OCI-LY7 (cell line): ENCODE measurements at regions of chr17 and their contacts with region 1.

Region 1: GRCh38 chr17:75301049-75301448 is 11.8 kb upstream of the SLC25A19 start:
- DNase-seq: no peak
- H3K4me3 ChIP-seq: no peak overlapping the region
- H3K27ac ChIP-seq: no peak overlapping the region
- H3K4me1 ChIP-seq: peaks cover 41% of the 10 kb centered on the region
- CTCF ChIP-seq: no peak

Region 2: GRCh38 chr17:74316220-74316619 is 984.8 kb before region 1 on chr17:
- CTCF ChIA-PET with region 1: no interaction called
- POLR2A ChIA-PET with region 1: no interaction called
- intact Hi-C with region 1: no loop called
- DNase-seq: no peak
- H3K4me3 ChIP-seq: no peak overlapping the region
- H3K27ac ChIP-seq: no peak overlapping the region
- H3K4me1 ChIP-seq: no peaks in the 10 kb centered on the region
- CTCF ChIP-seq: no peak

Region 3: GRCh38 chr17:75182569-75183450 is 118.2 kb before region 1 on chr17 and contains the start of gene SUMO2:
- CTCF ChIA-PET with region 1: no interaction called
- POLR2A ChIA-PET with region 1: no interaction called
- intact Hi-C with region 1: no loop called
- DNase-seq: peak; percentile 100
- H3K4me3 ChIP-seq: peak within 1 kb of the TSS; percentile 88
- H3K27ac ChIP-seq: peak within 1 kb of the TSS; percentile 91
- H3K4me1 ChIP-seq: peaks cover 24% of the 10 kb centered on the region
- CTCF ChIP-seq: peak; percentile 41; the same call in 1 of the 2 replicates
- total RNA-seq, gene SUMO2: 286 and 296 TPM in 2 replicates

Region 4: DNA sequence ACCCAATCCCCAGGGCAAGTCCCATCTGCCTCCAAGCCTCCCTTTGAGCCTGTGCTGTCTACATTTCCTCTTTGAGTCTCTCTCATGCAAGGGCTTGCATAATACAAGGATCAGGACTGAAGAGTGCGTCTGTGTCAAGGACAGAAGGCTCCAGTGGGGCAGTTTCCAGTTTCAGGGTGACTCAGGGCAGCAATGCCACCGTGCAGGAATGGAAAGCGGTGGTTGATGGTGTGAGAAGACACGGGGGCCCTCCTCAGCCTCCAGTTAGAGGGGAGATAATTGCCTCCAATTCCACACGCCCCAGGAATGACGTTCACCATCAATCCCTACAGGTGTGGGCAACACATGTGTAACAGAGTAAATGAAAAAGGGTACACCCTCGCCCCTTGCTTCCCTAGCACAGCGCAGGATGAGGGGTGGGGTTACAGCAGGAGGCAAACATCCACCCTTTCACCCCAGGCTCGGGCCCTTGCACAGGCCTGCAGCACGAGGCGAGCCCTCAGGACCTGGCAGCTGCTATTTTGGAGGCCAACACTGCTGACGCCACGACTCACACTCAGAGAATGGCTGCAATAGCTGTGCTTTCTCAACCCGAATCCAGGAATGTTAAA is 13.0 kb after region 1 on chr17:
- CTCF ChIA-PET with region 1: interaction called, 4 read pairs
- POLR2A ChIA-PET with region 1: interaction called, 108 read pairs
- intact Hi-C with region 1: no loop called
- DNase-seq: no peak
- H3K4me3 ChIP-seq: no peak overlapping the region
- H3K27ac ChIP-seq: peak overlapping the region; percentile 25
- H3K4me1 ChIP-seq: peaks cover 84% of the 10 kb centered on the region
- CTCF ChIP-seq: no peak